PC-3 (cell line): ENCODE measurements at regions of chr12 and their contacts with region 1.

Region 1: GRCh38 chr12:81147292-81147919 is 69.5 kb downstream of the ACSS3 start:
- DNase-seq: no peak
- ATAC-seq: no peak
- H3K4me3 ChIP-seq: no peak overlapping the region
- H3K27ac ChIP-seq: no peak overlapping the region
- H3K4me1 ChIP-seq: no peaks in the 10 kb centered on the region
- H3K27me3 ChIP-seq: no peaks in the 10 kb centered on the region
- CTCF ChIP-seq: no peak

Region 2: GRCh38 chr12:81086342-81086741 is 61.1 kb before region 1 on chr12:
- CTCF ChIA-PET with region 1: no interaction called
- POLR2A ChIA-PET with region 1: no interaction called
- intact Hi-C with region 1: no loop called
- DNase-seq: no peak
- ATAC-seq: no peak
- H3K4me3 ChIP-seq: no peak overlapping the region
- H3K27ac ChIP-seq: no peak overlapping the region
- H3K4me1 ChIP-seq: no peaks in the 10 kb centered on the region
- H3K27me3 ChIP-seq: peaks cover 10% of the 10 kb centered on the region
- CTCF ChIP-seq: no peak

Region 3: DNA sequence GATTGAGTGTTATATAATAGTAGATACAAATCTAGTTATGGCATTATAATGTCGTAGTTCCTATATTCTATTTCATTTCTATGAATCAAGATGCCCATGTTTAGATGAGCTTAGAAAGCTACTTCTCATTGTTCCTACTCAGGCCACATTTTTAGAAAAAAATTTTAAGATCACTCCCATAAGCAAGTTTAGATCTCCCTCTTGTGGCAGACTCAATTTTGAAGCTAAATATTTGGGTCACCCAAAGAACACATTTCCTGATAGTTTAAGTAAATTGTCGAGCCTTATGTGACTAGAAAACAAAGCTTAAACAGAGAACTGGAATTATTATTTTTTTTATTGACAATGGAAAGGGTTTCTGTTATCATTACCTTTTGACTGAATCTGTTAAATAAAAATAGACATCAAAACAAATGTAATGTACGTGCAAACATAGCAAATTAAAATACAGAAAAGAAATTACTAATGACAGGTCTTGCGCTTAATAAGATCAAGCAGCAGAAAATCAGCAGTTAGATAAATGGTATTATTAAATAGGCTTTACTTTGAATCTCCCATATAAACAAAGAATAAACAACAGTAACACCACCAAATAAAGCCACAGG is 110.6 kb after region 1 on chr12:
- CTCF ChIA-PET with region 1: no interaction called
- POLR2A ChIA-PET with region 1: no interaction called
- intact Hi-C with region 1: loop called (anchors 10 kb)
- DNase-seq: peak; percentile 66
- ATAC-seq: no peak; the same call in 1 of the 2 replicates
- H3K4me3 ChIP-seq: no peak overlapping the region
- H3K27ac ChIP-seq: no peak overlapping the region
- H3K4me1 ChIP-seq: no peaks in the 10 kb centered on the region
- H3K27me3 ChIP-seq: peaks cover 4% of the 10 kb centered on the region
- CTCF ChIP-seq: peak; percentile 76